Prostate gland (tissue), 2 donors: ENCODE measurements at regions of chr10 and their contacts with region 1.

Region 1: DNA sequence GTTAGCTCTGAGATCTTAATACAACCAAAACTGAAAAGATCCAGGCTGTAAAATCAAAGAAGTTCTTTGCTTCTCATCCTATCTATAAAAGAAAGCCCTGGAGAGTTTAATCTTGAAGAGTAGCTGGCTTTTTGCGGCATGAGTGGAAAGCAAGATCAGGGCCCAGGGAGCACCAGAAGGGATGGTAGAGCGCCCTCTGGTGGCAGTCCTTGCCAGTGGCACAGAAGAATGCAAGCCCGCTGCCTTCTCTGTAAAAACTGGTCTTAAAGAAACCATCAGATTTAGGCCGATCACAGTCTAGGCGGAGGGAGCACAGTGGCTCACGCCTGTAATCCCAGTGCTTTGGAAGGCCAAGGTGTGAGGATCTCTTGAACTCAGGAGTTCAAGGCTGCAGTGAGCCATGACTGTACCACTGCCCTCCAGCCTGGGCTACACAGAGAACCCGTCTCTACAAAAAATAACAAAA is 35.6 kb downstream of the CPN1 start:
- DNase-seq: peak; percentile 75
- H3K4me3 ChIP-seq: no peak overlapping the region
- H3K27ac ChIP-seq: no peak overlapping the region
- H3K4me1 ChIP-seq: no peaks in the 10 kb centered on the region
- H3K27me3 ChIP-seq: no peaks in the 10 kb centered on the region
- CTCF ChIP-seq: peak; percentile 83 to 97 (median 92)
- POLR2A ChIP-seq: no peak

Region 2: GRCh38 chr10:99845837-99846382 is 200.1 kb before region 1 on chr10:
- intact Hi-C with region 1: loop called (anchors 5 kb)
- DNase-seq: peak; percentile 82
- H3K4me3 ChIP-seq: peak overlapping the region in 1 of 2 donors; percentile 15
- H3K27ac ChIP-seq: peak overlapping the region in 1 of 2 donors; percentile 11
- H3K4me1 ChIP-seq: no peaks in the 10 kb centered on the region
- H3K27me3 ChIP-seq: no peaks in the 10 kb centered on the region
- CTCF ChIP-seq: peak; percentile 73 to 96 (median 94)
- POLR2A ChIP-seq: no peak

Region 3: DNA sequence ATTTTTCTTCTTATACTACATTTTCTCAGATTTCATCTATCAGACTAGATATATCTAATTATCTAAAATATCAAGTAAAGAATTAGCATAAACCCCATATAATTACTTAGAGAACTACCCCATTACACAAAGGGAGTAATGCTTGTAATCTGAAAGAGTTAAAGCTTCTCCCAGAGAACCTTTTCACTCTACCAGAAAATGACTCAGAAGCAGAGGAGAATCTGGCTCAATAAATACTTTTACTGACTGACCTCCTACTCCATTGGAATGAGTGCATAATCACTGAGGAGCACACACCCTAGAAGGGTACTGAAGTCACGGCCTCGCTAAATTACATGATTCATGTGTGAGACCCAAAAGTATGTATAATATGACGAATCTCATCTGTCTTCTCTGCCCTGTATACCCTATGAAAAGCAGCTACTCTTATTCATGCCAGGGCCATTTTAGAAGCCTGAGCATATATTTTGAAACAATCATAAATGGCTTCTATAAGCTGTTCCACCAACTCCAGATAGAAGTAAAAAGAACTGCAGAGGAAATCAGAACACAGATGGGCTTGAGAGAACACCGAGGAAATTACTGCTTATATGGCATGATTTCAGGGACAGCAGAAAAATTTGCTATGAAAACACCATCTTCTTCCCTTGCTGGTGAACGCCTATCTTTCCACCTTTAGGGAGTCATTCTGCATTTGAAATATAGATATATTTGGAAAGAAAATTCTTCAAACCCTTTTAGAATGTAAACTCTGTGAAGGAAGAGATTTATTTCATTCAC is 69.0 kb before region 1 on chr10:
- intact Hi-C with region 1: loop called (anchors 10 kb)
- DNase-seq: no peak
- H3K4me3 ChIP-seq: no peak overlapping the region
- H3K27ac ChIP-seq: peak overlapping the region in 1 of 2 donors; percentile 18
- H3K4me1 ChIP-seq: no peaks in the 10 kb centered on the region
- H3K27me3 ChIP-seq: no peaks in the 10 kb centered on the region
- CTCF ChIP-seq: no peak
- POLR2A ChIP-seq: no peak

Region 4: DNA sequence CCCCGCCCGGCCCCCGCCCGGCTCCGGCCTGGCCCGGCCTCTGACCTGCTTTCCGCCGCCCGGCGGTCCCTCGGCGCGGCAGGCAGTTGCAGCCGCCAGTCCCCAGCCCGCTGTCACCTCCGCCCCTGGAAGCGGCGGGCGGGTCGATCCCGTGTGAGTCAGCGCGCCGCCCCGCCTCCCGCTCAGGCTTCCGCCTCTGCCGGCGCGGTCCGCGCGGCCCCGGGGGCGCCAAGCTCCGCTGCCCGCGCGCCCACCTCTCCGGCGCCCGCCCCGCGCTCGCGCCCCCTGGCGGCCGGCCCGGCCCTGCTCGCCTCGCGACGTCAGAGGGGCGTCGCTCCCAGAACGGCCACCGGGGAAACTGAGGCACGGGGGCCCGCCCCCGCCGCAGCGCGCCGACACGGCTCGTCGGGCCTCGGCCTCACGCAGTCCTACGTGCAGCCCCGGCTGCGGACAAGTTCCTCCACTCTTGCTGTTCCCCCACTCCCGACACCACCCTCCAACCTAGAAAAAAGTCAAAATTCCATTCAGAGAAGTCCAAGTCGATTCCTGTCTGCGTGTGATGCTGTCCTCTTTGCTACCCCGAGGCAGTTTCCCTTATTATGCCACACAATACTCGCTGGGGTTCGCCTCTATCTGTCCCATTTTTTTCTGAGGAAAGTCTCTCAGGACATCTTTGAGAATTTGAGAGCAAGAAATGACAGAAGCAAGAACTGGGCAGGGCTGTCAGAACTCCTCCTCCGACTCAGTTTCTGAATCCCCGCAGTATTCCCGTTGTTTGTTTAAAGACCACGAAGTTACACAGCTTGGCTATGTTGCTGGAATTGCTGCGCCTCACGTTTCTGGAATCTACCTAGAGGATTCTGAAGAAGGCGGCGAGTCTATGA is 36.0 kb before region 1 on chr10 and contains the start of gene DNMBP:
- intact Hi-C with region 1: loop called (anchors 5 kb)
- DNase-seq: peak; percentile 70
- H3K4me3 ChIP-seq: peak within 1 kb of the TSS; percentile 66 to 69
- H3K27ac ChIP-seq: peak within 1 kb of the TSS; percentile 72 to 75
- H3K4me1 ChIP-seq: no peaks in the 10 kb centered on the region
- H3K27me3 ChIP-seq: no peaks in the 10 kb centered on the region
- CTCF ChIP-seq: peak; percentile 54 to 77 (median 58)
- POLR2A ChIP-seq: no peak
- total RNA-seq, gene DNMBP: 15.5 to 27.9 TPM